ENCODE measurements at regions of chr17 and their contacts with region 1.

Region 1: DNA sequence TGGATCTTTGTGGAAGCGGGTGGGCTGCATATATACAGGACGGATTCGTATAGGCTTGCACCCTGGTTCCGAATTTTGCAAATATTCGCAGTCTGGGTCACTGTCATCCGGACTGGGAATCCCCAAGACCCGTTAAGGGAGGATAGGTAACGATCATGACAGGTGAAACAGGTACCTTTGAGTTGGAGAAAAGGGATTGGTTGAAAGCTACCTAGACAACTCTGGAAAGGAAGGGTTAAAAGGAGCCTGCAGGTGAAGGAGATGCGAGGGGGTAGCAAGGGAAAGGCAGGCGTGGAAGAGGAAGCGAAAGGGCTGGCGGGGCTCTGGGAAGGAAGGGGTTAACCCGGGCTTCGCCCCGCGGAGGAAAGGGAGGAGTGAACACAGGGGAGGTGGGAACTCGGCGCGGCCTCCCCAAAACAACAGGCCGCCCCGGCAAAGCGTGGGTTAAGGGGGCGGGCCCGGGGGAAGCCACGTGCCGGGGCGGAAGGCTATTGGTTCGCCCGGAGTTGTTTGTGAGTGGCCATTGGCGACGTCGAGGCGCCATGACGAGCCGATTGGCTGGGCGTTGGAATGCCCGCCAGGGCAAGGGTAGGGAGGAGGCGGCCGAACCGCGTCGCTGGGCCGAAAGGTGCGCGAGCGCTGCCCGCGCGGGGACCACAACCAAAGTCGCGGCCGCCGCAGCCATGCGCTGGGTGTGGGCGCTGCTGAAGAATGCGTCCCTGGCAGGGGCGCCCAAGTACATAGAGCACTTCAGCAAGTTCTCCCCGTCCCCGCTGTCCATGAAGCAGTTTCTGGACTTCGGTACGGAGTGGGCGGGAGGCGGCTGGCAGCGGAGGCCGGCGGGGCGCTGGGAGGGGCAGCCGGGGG is at the start of gene PDK2:
- DNase-seq: peak; percentile 95
- ATAC-seq: peak; percentile 93
- H3K4me3 Mint-ChIP-seq: peak within 1 kb of the TSS; percentile 89
- H3K27ac Mint-ChIP-seq: peak within 1 kb of the TSS; percentile 90
- H3K4me1 Mint-ChIP-seq: peaks cover 26% of the 10 kb centered on the region
- H3K27me3 Mint-ChIP-seq: no peaks in the 10 kb centered on the region
- CTCF ChIP-seq: no peak
- total RNA-seq, gene PDK2: 6.0 to 7.7 TPM

Region 2: DNA sequence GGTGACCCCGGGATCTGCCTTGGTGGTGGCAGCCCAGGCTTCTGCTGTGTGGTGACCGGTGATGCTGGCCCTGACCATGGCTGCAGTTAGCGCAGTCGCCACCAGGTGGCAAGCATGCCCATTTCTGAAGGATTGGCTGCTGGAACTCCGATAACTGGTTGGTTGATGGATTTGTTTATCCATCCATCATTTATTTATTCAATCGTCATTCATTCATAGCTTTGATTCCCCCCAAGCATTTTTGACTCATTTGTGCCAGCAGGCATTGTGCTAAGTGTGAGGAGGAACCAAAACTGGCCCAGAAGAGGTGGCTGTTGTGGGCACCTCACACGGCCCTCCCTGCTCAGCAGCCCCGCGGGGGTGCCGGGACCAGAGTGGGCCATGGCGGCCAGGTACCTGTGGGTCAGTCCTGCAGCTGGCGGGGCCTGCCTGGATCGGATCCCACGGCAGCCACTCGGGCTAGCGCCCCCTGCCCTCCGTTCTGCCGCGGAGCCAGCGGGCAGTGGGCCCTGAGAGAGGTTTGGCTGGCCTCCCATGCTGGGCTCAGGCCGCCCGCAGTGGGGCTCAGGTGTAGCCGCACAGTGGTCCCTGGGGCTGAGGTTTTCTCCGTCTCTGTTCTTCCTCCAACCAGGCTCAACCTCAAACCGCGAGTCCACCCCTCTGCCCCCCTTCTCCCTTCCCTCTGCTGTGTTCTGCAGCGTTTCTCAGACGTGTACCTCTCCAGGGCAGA is 67.9 kb before region 1 on chr17:
- CTCF ChIA-PET with region 1: interaction called, 69 read pairs
- POLR2A ChIA-PET with region 1: interaction called, 7 read pairs
- intact Hi-C with region 1: no loop called
- DNase-seq: peak; percentile 87
- ATAC-seq: peak; percentile 86
- H3K4me3 Mint-ChIP-seq: no peak overlapping the region
- H3K27ac Mint-ChIP-seq: no peak overlapping the region
- H3K4me1 Mint-ChIP-seq: peaks cover 12% of the 10 kb centered on the region
- H3K27me3 Mint-ChIP-seq: peaks cover 24% of the 10 kb centered on the region
- CTCF ChIP-seq: peak; percentile 97

Region 3: GRCh38 chr17:50079334-50080095 is 15.5 kb before region 1 on chr17:
- CTCF ChIA-PET with region 1: interaction called, 15 read pairs
- POLR2A ChIA-PET with region 1: interaction called, 3 read pairs
- intact Hi-C with region 1: no loop called
- DNase-seq: peak; percentile 42
- ATAC-seq: peak; percentile 51
- H3K4me3 Mint-ChIP-seq: no peak overlapping the region
- H3K27ac Mint-ChIP-seq: no peak overlapping the region
- H3K4me1 Mint-ChIP-seq: no peaks in the 10 kb centered on the region
- H3K27me3 Mint-ChIP-seq: no peaks in the 10 kb centered on the region
- CTCF ChIP-seq: no peak

Region 4: DNA sequence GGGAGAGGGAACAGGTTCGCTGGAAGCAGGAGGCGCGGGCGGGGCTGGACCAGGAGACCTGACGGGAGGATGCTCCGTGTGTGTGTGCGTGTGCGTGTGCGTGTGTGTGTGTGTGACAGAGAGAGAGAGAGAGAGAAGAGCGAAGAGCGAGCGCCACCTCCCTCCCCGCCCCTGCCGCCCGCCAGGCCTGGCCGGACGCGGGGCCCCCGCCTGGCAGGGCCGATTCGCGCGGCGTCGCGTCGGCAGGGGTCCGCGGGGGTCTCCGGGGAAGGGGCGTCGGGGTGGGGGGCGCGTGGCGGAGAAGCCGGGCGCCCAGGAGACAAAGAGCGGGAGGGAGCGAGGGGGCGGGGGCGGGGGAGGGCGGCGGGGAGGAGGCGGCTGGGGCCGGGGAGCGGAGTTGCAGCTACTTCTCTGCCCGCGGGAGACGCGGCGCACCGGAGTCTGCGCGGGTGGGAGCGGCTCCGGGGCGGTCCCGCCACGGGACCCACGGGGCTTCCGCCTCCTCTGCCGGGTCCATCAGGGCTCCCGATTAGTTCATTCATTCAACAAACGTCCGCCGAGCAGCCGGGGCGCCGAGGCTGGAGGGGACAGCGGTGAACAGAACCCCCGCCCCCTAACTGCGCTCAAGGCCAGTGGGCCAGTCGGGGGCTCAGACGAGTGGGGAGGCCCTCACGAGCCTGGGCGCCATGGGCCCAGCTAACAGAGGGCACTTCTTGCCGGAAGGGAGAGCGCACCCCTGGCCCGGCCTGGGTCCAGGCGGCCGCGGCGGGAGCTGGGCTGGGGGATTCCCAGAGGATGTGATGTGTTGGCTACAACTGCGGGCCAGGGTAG is 35.0 kb after region 1 on chr17 and contains the start of gene SAMD14:
- CTCF ChIA-PET with region 1: interaction called, 17 read pairs
- POLR2A ChIA-PET with region 1: no interaction called
- intact Hi-C with region 1: no loop called
- DNase-seq: peak; percentile 61
- ATAC-seq: peak; percentile 53
- H3K4me3 Mint-ChIP-seq: peak within 1 kb of the TSS; percentile 58
- H3K27ac Mint-ChIP-seq: peak within 1 kb of the TSS; percentile 62
- H3K4me1 Mint-ChIP-seq: peaks cover 22% of the 10 kb centered on the region
- H3K27me3 Mint-ChIP-seq: peaks cover 23% of the 10 kb centered on the region
- CTCF ChIP-seq: no peak
- total RNA-seq, gene SAMD14: 0.47 to 1.3 TPM

Region 5: GRCh38 chr17:50161023-50161910 is 66.3 kb after region 1 on chr17:
- CTCF ChIA-PET with region 1: interaction called, 37 read pairs
- POLR2A ChIA-PET with region 1: interaction called, 3 read pairs
- intact Hi-C with region 1: no loop called
- DNase-seq: peak; percentile 96
- ATAC-seq: peak; percentile 92
- H3K4me3 Mint-ChIP-seq: peak overlapping the region; percentile 65
- H3K27ac Mint-ChIP-seq: peak overlapping the region; percentile 97
- H3K4me1 Mint-ChIP-seq: peaks cover 44% of the 10 kb centered on the region
- H3K27me3 Mint-ChIP-seq: no peaks in the 10 kb centered on the region
- CTCF ChIP-seq: peak; percentile 84

Region 6: GRCh38 chr17:50200457-50201275 is 105.7 kb after region 1 on chr17:
- CTCF ChIA-PET with region 1: interaction called, 30 read pairs
- POLR2A ChIA-PET with region 1: no interaction called
- intact Hi-C with region 1: no loop called
- DNase-seq: peak; percentile 90
- ATAC-seq: peak; percentile 78
- H3K4me3 Mint-ChIP-seq: peak overlapping the region; percentile 67
- H3K27ac Mint-ChIP-seq: no peak overlapping the region
- H3K4me1 Mint-ChIP-seq: peaks cover 20% of the 10 kb centered on the region
- H3K27me3 Mint-ChIP-seq: peaks cover 47% of the 10 kb centered on the region
- CTCF ChIP-seq: peak; percentile 100

Measured in activated CD8-positive, alpha-beta T cell treated with anti-CD3 and anti-CD28 coated beads for 36 hours (primary cell).